BJ (cell line): ENCODE measurements at regions of chr5 and their contacts with region 1.

Region 1: GRCh38 chr5:151651997-151652645 is 34.6 kb downstream of the SPARC start:
- DNase-seq: no peak
- H3K4me3 ChIP-seq: no peak overlapping the region
- H3K27me3 ChIP-seq: no peaks in the 10 kb centered on the region
- CTCF ChIP-seq: peak; percentile 96

Region 2: DNA sequence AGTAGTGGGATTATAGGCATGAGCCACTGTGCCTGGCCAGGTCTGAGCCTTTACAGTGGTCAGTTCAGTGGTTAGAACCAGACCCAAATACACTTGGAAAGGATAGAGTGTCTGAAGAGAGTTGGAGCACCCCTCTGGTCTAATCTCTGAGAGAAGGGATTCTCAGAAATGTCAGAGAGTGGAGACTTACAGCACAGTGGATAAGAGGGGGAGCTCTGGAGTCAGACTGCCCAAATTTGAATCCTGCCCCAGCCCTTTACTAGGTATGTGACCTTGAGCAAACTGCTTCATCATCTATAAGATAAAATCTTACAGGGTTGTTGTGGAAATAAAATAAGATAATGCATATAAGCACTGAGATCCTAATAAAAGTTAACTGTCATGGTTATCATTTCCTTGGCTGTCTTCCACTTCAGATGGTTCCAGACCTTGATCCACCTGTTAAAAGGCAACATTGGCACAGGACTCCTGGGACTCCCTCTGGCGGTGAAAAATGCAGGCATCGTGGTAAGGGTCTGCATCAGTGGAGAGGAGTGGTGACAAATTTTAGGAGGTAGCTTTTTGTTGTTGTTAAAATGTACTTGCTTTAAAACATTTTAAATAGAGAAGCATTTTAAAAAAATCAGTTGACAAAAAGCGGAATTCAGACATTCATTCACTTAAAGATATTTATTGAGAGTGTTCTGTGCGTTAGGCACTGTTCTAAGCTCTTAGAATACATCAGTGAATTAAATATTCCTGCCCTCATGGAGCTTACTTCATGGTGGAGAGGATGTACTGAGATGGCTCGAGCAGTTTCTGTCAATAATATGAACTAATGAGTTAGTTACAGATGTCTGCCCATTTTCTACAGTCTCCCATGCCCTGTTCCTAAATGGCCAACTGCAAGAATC is 188.7 kb before region 1 on chr5:
- CTCF ChIA-PET with region 1: interaction called, 13 read pairs
- POLR2A ChIA-PET with region 1: no interaction called
- DNase-seq: no peak
- H3K4me3 ChIP-seq: no peak overlapping the region
- H3K27me3 ChIP-seq: no peaks in the 10 kb centered on the region
- CTCF ChIP-seq: peak; percentile 38

Region 3: GRCh38 chr5:151499501-151500035 is 152.6 kb before region 1 on chr5:
- CTCF ChIA-PET with region 1: interaction called, 15 read pairs
- POLR2A ChIA-PET with region 1: no interaction called
- DNase-seq: no peak
- H3K4me3 ChIP-seq: no peak overlapping the region
- H3K27me3 ChIP-seq: no peaks in the 10 kb centered on the region
- CTCF ChIP-seq: no peak

Region 4: DNA sequence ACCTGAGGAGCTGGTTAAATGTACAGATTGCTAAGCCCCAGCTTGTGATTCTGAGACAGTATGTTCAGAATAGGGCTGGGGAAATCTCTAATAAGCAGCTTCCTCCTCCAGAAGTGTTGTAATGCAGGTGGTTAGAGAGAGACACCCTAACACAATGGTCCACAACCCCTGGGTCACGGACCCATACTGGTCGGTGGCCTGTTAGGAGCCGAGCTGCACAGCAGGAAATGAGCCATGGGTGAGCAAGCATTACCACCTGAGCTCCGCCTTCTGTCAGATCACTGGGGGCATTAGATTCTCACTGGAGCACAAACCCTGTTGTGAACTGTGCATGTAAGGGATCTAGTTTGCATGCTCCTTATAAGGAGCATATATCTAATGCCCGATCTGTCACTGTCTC is 142.9 kb before region 1 on chr5:
- CTCF ChIA-PET with region 1: interaction called, 11 read pairs
- POLR2A ChIA-PET with region 1: no interaction called
- DNase-seq: no peak
- H3K4me3 ChIP-seq: no peak overlapping the region
- H3K27me3 ChIP-seq: no peaks in the 10 kb centered on the region
- CTCF ChIP-seq: no peak

Region 5: GRCh38 chr5:151523335-151523734 is 128.8 kb before region 1 on chr5:
- CTCF ChIA-PET with region 1: interaction called, 26 read pairs
- POLR2A ChIA-PET with region 1: no interaction called
- DNase-seq: no peak
- H3K4me3 ChIP-seq: no peak overlapping the region
- H3K27me3 ChIP-seq: no peaks in the 10 kb centered on the region
- CTCF ChIP-seq: peak; percentile 65

Region 6: DNA sequence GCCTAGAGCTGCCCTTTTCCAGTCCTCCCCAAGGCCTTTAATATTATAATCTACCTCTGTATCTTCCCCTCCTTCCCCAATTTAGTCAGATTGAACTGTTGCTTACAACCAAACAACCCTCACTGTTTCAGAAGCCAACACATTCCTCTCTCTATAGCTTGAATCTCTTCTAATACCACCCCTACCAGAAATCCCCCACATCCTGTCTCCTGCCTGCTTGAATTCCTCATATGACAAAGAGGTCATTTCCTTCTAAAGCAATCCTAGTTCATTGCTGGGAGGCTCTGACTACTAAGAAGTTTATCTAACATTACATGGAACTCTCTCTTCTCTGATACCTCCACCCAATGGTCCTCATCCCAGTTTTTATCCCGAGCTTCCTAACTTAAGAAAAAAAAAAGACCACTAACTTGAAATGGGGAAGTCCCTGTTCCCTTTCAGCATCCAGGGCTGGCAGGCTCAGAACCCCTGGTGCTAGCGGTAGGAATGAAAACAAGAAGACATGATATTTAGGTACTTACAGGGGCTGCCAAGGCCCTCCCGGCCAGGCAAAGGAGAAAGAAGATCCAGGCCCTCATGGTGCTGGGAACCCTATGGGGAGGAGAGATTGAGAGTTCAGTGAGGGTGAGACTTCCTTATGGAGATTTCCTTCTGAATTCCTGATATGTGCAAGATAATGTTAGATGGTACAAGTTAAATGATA is 23.6 kb after region 1 on chr5:
- CTCF ChIA-PET with region 1: interaction called, 12 read pairs
- POLR2A ChIA-PET with region 1: no interaction called
- DNase-seq: no peak
- H3K4me3 ChIP-seq: no peak overlapping the region
- H3K27me3 ChIP-seq: no peaks in the 10 kb centered on the region
- CTCF ChIP-seq: no peak